CD8-positive, alpha-beta T cell (primary cell): ENCODE measurements at regions of chr11 and their contacts with region 1.

Region 1: DNA sequence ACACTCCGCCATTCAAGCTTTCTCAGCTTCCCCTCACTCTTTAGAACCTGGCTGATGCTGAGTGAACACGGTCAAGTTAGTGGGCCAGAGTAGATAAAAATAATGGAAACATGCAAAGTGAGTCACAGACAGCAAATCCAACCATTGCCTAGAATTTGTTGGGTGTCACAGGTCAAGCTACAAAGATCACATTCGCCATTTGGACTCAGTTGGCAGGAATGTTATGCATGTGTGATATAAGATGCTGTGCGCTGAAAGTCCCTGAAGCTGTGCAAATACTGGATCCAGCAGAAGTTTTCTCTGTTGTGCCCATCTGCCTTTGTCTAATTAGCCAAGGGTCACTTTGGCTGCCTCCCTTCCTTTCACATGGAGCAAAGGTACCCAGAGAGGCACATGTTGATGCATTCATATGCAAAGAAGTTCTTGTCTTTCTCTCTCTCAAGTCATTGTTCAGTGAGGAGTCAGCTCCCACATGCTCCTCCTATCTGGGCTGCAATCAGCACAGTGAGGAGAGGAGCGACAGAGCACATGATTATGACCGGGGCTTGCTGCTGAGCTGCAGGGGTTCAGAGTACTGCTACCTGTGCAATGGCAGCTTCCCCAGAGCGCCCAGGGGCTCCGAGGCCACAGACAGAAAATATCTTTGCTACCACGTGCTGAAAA is 39.7 kb downstream of the FLI1 start:
- DNase-seq: peak in 6 of 9 experiments; percentile 31 to 64 (median 50)
- ATAC-seq: peak; percentile 50
- H3K4me3 ChIP-seq: peak overlapping the region in 1 of 2 experiments; percentile 4
- H3K4me3 Mint-ChIP-seq: peak overlapping the region; percentile 76
- H3K27ac ChIP-seq: peak overlapping the region in 1 of 2 experiments; percentile 64
- H3K27ac Mint-ChIP-seq: peak overlapping the region; percentile 91
- H3K4me1 ChIP-seq: peaks cover 99% of the 10 kb centered on the region
- H3K4me1 Mint-ChIP-seq: peaks cover 99% of the 10 kb centered on the region
- H3K27me3 ChIP-seq: no peaks in the 10 kb centered on the region
- H3K27me3 Mint-ChIP-seq: no peaks in the 10 kb centered on the region
- CTCF ChIP-seq: no peak

Region 2: DNA sequence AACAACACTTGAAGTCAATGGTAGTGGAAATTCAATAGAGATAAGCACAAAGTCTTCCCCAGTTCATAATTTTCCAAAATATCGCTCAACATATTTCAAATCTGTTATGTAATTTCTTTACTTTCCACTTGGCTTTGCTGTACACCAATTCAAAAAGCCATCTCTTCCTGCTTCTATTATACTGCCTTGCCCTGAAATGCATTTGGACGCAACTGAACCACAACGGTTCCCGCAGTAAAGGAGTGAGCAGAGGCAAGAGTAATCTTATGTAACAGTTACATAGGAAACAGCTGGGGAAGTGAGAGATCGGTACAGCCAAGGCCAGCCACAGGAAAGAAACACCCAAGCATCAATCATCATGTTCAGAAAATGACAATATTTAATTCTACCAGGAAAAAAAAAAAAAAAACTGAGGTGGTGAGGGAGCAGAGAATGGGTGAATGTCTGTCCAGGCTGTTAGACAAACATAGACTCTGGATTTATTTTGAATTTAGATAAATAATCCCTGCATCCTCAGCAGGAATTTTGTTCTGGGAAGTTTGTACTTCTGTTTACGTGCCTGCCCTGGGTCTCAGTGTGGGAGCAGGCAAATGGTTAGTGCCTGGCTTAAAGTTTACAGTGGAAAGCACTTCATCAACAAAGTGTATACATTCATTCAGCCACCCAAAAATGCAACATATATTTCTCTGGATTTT is 538.4 kb before region 1 on chr11:
- CTCF ChIA-PET with region 1: no interaction called
- POLR2A ChIA-PET with region 1: no interaction called
- intact Hi-C with region 1: no loop called
- DNase-seq: peak; percentile 8 to 88 (median 44)
- ATAC-seq: peak; percentile 86
- H3K4me3 ChIP-seq: no peak overlapping the region
- H3K4me3 Mint-ChIP-seq: peak overlapping the region; percentile 23
- H3K27ac ChIP-seq: peak overlapping the region in 1 of 2 experiments; percentile 60
- H3K27ac Mint-ChIP-seq: peak overlapping the region; percentile 57
- H3K4me1 ChIP-seq: peaks cover 34% of the 10 kb centered on the region
- H3K4me1 Mint-ChIP-seq: peaks cover 32% of the 10 kb centered on the region
- H3K27me3 ChIP-seq: no peaks in the 10 kb centered on the region
- H3K27me3 Mint-ChIP-seq: no peaks in the 10 kb centered on the region
- CTCF ChIP-seq: peak; percentile 55

Region 3: DNA sequence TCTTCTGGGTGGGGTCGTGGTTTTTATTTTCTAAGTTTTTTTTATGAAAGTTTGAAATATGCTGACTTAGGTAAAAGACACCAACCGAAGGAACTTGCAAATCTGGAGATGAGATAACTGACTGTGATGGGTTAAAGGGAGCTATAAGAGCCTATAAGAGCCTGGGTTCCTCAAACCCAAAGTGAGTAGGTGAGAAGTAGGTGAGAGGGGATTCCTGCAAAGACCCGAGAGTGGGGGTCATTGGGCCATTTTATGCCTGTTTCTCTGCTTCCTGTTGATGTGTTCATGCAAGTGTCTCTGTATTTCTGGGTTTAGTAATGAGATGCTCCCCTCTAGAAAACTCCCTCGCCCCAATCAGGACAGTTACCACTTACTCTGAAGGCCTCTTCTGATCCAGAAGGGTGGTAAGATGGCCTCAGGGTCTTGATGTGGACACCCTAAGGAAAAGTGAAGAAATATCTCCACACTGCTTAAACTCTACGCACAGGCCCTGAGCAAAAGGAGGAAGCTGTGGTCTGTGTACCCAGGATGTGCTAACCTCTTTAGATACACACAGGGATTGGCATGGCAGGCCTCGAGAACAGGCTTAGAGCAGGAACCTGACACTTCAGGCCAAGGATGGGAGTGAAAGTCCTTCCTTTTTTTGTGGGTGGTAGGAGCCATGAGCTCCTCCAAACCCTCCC is 37.9 kb before region 1 on chr11:
- CTCF ChIA-PET with region 1: interaction called, 9 read pairs
- POLR2A ChIA-PET with region 1: interaction called, 30 read pairs
- intact Hi-C with region 1: no loop called
- DNase-seq: peak in 6 of 9 experiments; percentile 29 to 78 (median 54)
- ATAC-seq: peak; percentile 47
- H3K4me3 ChIP-seq: peak overlapping the region; percentile 93 to 95
- H3K4me3 Mint-ChIP-seq: peak overlapping the region; percentile 98
- H3K27ac ChIP-seq: peak overlapping the region; percentile 80 to 89
- H3K27ac Mint-ChIP-seq: peak overlapping the region; percentile 98
- H3K4me1 ChIP-seq: peaks cover 54% of the 10 kb centered on the region
- H3K4me1 Mint-ChIP-seq: peaks cover 58% of the 10 kb centered on the region
- H3K27me3 ChIP-seq: no peaks in the 10 kb centered on the region
- H3K27me3 Mint-ChIP-seq: no peaks in the 10 kb centered on the region
- CTCF ChIP-seq: no peak

Region 4: GRCh38 chr11:128716661-128717210 is 16.8 kb before region 1 on chr11:
- CTCF ChIA-PET with region 1: interaction called, 8 read pairs
- POLR2A ChIA-PET with region 1: interaction called, 7 read pairs
- intact Hi-C with region 1: loop called in 1 of 2 experiments (anchors 1 kb)
- DNase-seq: peak in 6 of 9 experiments; percentile 55 to 85 (median 70)
- ATAC-seq: peak; percentile 64
- H3K4me3 ChIP-seq: peak overlapping the region; percentile 9 to 14
- H3K4me3 Mint-ChIP-seq: peak overlapping the region; percentile 80
- H3K27ac ChIP-seq: peak overlapping the region; percentile 50 to 81
- H3K27ac Mint-ChIP-seq: peak overlapping the region; percentile 99
- H3K4me1 ChIP-seq: peaks cover 97% of the 10 kb centered on the region
- H3K4me1 Mint-ChIP-seq: peaks cover 99% of the 10 kb centered on the region
- H3K27me3 ChIP-seq: no peaks in the 10 kb centered on the region
- H3K27me3 Mint-ChIP-seq: no peaks in the 10 kb centered on the region
- CTCF ChIP-seq: no peak

Region 5: GRCh38 chr11:128745311-128746136 is 12.0 kb after region 1 on chr11:
- CTCF ChIA-PET with region 1: interaction called, 6 read pairs
- POLR2A ChIA-PET with region 1: interaction called, 6 read pairs
- intact Hi-C with region 1: loop called in 1 of 2 experiments (anchors 2 kb)
- DNase-seq: peak in 1 of 9 experiments; percentile 44
- ATAC-seq: no peak
- H3K4me3 ChIP-seq: no peak overlapping the region
- H3K4me3 Mint-ChIP-seq: no peak overlapping the region
- H3K27ac ChIP-seq: peak overlapping the region in 1 of 2 experiments; percentile 21
- H3K27ac Mint-ChIP-seq: peak overlapping the region; percentile 23
- H3K4me1 ChIP-seq: peaks cover 57% of the 10 kb centered on the region
- H3K4me1 Mint-ChIP-seq: peaks cover 82% of the 10 kb centered on the region
- H3K27me3 ChIP-seq: no peaks in the 10 kb centered on the region
- H3K27me3 Mint-ChIP-seq: no peaks in the 10 kb centered on the region
- CTCF ChIP-seq: no peak

Region 6: DNA sequence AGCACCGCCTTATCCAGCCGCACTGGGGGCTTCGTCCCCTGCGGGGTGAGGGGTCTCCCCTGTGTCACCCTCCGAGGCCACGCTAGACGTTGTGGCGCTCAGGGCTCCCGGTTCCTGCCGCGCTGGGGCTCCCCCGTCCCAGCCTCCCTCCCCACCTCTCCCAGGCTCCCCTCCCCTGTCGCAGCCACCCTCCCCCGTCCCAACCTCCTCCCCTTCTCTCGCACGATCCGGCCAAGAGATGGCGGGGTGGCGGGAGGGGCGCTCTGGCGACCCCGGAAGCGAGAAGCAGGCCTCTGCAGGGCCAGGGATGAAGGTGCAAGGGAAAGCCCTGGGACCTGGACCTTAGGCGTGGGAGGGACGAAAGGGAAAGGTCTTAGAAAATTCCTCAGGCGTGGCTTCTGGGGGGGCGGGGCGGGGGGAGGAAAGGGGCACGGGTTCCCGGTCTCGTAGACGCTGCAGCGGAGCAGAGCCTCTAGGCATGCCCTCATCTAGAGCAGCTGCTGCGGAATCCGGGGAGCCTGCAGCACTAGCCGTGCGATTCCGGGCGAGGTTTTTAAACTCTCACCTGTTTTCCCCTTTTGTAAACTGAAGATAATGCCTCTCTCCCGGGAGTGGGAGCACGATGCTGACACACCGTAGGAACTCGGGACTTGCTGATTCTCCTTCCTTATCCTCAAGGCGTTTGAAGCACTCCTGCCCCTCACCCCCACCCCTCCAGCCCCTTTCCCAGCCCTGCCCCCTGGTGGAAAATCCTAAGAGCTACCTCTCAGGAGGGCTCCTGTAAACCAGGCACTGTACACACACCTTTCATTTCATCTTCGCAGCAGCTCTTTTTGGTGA is 172.0 kb after region 1 on chr11:
- CTCF ChIA-PET with region 1: no interaction called
- POLR2A ChIA-PET with region 1: no interaction called
- intact Hi-C with region 1: loop called in 1 of 2 experiments (anchors 5 kb)
- DNase-seq: peak in 6 of 9 experiments; percentile 13 to 67 (median 51)
- ATAC-seq: peak; percentile 77
- H3K4me3 ChIP-seq: peak overlapping the region; percentile 59 to 60
- H3K4me3 Mint-ChIP-seq: peak overlapping the region; percentile 79
- H3K27ac ChIP-seq: no peak overlapping the region
- H3K27ac Mint-ChIP-seq: no peak overlapping the region
- H3K4me1 ChIP-seq: peaks cover 7% of the 10 kb centered on the region
- H3K4me1 Mint-ChIP-seq: peaks cover 21% of the 10 kb centered on the region
- H3K27me3 ChIP-seq: peaks cover 0 to 2% of the 10 kb centered on the region in 2 experiments
- H3K27me3 Mint-ChIP-seq: peaks cover 40% of the 10 kb centered on the region
- CTCF ChIP-seq: peak; percentile 46